ENCODE measurements at regions of chr6 and their contacts with region 1.

Region 1: DNA sequence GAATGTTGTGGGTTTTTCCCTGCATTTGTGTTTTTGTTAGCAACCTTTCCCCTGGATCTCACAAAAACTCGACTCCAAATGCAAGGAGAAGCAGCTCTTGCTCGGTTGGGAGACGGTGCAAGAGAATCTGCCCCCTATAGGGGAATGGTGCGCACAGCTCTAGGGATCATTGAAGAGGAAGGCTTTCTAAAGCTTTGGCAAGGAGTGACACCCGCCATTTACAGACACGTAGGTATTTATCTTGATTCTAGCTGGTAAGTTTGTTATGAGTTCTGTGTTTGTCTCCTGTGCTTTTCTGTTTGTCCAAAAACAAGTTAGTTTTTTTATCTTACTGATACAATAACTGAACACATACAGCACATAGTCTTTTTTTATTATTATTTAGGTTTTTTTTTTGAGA is 3.0 kb downstream of the SLC25A27 start:
- DNase-seq: peak; percentile 78
- ATAC-seq: peak; percentile 55
- H3K4me3 Mint-ChIP-seq: no peak overlapping the region
- H3K27ac Mint-ChIP-seq: no peak overlapping the region
- H3K4me1 Mint-ChIP-seq: peaks cover 18% of the 10 kb centered on the region
- H3K27me3 Mint-ChIP-seq: peaks cover 23% of the 10 kb centered on the region
- CTCF ChIP-seq: peak; percentile 50

Region 2: DNA sequence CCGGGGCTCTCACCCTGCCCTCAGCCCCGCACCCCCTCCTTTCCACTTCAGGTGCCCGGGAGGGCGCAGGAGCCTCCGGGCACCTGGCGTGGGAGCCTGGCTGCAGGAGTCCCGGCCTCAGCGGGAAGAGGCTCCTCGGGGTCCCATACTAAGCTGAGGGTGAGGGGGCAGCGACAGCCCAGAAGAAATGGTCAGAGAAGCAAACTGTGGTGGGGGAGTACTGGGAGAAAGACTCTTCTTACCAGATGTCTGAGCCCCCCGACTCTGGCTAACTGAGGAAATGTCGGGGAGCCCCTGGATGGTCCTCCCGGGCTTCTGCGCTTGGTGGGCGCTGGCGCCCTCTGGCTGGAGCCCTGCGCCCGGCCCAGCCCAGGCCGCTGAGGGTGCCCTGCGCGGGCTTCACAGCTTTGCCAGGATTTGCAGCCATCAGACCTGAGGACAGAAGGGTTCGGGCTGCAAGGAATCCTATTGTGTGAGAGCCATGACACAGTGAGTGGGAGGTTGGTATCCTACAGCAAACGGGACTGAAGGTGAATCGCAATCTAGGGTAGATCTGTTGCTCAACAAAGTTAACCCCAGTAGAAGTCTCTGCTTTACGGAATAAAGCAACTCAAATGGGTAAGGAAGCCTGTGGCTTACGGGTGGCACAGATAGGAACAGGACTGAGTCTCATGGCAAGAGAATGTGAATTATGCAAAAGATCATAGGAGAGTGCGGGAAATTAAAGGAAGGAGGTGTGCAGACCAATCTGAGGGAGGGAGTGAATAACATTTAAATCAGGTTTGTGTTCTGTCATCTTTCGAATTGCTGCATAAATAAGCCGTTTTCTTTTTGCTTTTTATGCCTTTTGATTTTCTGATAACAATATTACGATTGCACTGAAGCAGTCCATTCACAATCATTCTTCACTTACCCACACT is 163.9 kb before region 1 on chr6:
- CTCF ChIA-PET with region 1: interaction called, 13 read pairs
- POLR2A ChIA-PET with region 1: interaction called, 3 read pairs
- DNase-seq: peak; percentile 56
- ATAC-seq: peak; percentile 73
- H3K4me3 Mint-ChIP-seq: peak overlapping the region; percentile 57
- H3K27ac Mint-ChIP-seq: no peak overlapping the region
- H3K4me1 Mint-ChIP-seq: peaks cover 34% of the 10 kb centered on the region
- H3K27me3 Mint-ChIP-seq: peaks cover 50% of the 10 kb centered on the region
- CTCF ChIP-seq: no peak

Region 3: GRCh38 chr6:46667377-46667776 is 11.6 kb after region 1 on chr6:
- CTCF ChIA-PET with region 1: interaction called, 31 read pairs
- POLR2A ChIA-PET with region 1: interaction called, 3 read pairs
- DNase-seq: no peak
- ATAC-seq: no peak
- H3K4me3 Mint-ChIP-seq: no peak overlapping the region
- H3K27ac Mint-ChIP-seq: no peak overlapping the region
- H3K4me1 Mint-ChIP-seq: no peaks in the 10 kb centered on the region
- H3K27me3 Mint-ChIP-seq: no peaks in the 10 kb centered on the region
- CTCF ChIP-seq: no peak

Region 4: GRCh38 chr6:46674410-46674809 is 18.6 kb after region 1 on chr6:
- CTCF ChIA-PET with region 1: interaction called, 10 read pairs
- POLR2A ChIA-PET with region 1: interaction called, 3 read pairs
- DNase-seq: no peak
- ATAC-seq: no peak
- H3K4me3 Mint-ChIP-seq: no peak overlapping the region
- H3K27ac Mint-ChIP-seq: no peak overlapping the region
- H3K4me1 Mint-ChIP-seq: peaks cover 9% of the 10 kb centered on the region
- H3K27me3 Mint-ChIP-seq: no peaks in the 10 kb centered on the region
- CTCF ChIP-seq: no peak

Region 5: GRCh38 chr6:46734867-46735719 is 79.3 kb after region 1 on chr6 and contains the start of gene PLA2G7:
- CTCF ChIA-PET with region 1: interaction called, 19 read pairs
- POLR2A ChIA-PET with region 1: no interaction called
- DNase-seq: peak; percentile 65
- ATAC-seq: peak; percentile 78
- H3K4me3 Mint-ChIP-seq: peak within 1 kb of the TSS; percentile 92
- H3K27ac Mint-ChIP-seq: no peak within 1 kb of the TSS
- H3K4me1 Mint-ChIP-seq: peaks cover 28% of the 10 kb centered on the region
- H3K27me3 Mint-ChIP-seq: peaks cover 42% of the 10 kb centered on the region
- CTCF ChIP-seq: no peak
- total RNA-seq, gene PLA2G7: 2.3 to 2.4 TPM (median 2.3 TPM) in 3 replicates

Region 6: GRCh38 chr6:46832816-46833215 is 177.0 kb after region 1 on chr6:
- CTCF ChIA-PET with region 1: no interaction called
- POLR2A ChIA-PET with region 1: no interaction called
- DNase-seq: no peak
- ATAC-seq: no peak
- H3K4me3 Mint-ChIP-seq: no peak overlapping the region
- H3K27ac Mint-ChIP-seq: no peak overlapping the region
- H3K4me1 Mint-ChIP-seq: no peaks in the 10 kb centered on the region
- H3K27me3 Mint-ChIP-seq: no peaks in the 10 kb centered on the region
- CTCF ChIP-seq: no peak